A549 (cell line): ENCODE measurements at regions of chr19 and their contacts with region 1.

Region 1: GRCh38 chr19:43474986-43475705 is 9.7 kb upstream of the LYPD3 start:
- DNase-seq: peak; percentile 96 to 99
- ATAC-seq: peak; percentile 82 to 92
- H3K4me3 ChIP-seq: peak overlapping the region; percentile 34
- H3K27ac ChIP-seq: peak overlapping the region; percentile 69 to 82
- H3K4me1 ChIP-seq: 0 out of 3 replicates have a peak, but pooled peaks cover 4% of the 10 kb centered on the region
- CTCF ChIP-seq: no peak
- EP300 ChIP-seq: no peak
- POLR2A ChIP-seq: peak; percentile 72
- RAD21 ChIP-seq: no peak

Region 2: GRCh38 chr19:42553292-42554045 is 921.7 kb before region 1 on chr19:
- CTCF ChIA-PET with region 1: no interaction called
- POLR2A ChIA-PET with region 1: interaction called, 10 read pairs
- DNase-seq: no peak
- ATAC-seq: no peak; a peak in 1 of 6 replicates
- H3K4me3 ChIP-seq: no peak overlapping the region
- H3K27ac ChIP-seq: no peak overlapping the region
- H3K4me1 ChIP-seq: no peaks in the 10 kb centered on the region
- CTCF ChIP-seq: no peak
- EP300 ChIP-seq: no peak
- POLR2A ChIP-seq: no peak
- RAD21 ChIP-seq: no peak

Region 3: DNA sequence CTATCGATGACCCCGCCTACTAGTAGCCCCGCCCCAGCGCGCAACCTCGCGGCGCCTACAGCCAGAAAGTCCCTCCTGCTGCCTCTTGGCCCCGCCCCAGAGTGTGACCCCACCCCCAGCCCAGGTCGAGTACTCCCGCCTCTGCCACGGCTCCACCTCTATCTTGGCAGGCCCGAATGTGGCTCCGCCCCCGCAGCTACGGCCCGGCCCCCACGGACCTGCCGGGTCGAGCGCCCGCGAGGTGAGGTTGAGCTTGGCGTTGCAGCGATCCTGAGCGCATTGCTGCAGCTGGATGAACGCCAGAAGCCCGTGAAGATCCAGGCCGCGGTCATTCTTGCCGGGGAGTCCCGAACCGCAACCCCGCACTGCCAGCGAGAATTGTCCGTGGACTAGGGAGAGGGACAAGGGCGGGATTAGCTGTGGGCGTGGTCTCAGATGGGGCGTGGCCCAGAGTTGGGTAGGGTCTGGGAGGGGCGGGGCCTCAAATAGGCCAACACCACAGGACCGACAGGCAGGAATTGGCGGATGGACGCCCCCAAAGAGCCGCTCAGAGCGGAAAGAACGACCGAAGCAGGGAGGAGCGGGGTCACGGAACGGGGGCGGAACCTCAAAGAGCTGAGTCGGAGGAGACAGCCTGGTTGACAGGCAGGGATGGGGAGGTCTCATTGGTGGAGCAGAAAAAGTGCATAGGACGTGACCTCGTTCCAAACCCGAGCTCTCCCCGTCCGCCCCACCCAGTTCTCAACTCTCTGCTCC is 11.6 kb before region 1 on chr19:
- CTCF ChIA-PET with region 1: interaction called, 14 read pairs
- POLR2A ChIA-PET with region 1: interaction called, 17 read pairs
- DNase-seq: peak; percentile 97 to 98
- ATAC-seq: peak; percentile 84 to 91
- H3K4me3 ChIP-seq: peak overlapping the region; percentile 62
- H3K27ac ChIP-seq: peak overlapping the region; percentile 52 to 79; a peak in 5 of 6 replicates
- H3K4me1 ChIP-seq: peaks cover 15% of the 10 kb centered on the region
- CTCF ChIP-seq: no peak
- EP300 ChIP-seq: no peak
- POLR2A ChIP-seq: no peak; the same call in 1 of the 2 replicates
- RAD21 ChIP-seq: no peak